ENCODE measurements at regions of chr4 and their contacts with region 1.

Region 1: DNA sequence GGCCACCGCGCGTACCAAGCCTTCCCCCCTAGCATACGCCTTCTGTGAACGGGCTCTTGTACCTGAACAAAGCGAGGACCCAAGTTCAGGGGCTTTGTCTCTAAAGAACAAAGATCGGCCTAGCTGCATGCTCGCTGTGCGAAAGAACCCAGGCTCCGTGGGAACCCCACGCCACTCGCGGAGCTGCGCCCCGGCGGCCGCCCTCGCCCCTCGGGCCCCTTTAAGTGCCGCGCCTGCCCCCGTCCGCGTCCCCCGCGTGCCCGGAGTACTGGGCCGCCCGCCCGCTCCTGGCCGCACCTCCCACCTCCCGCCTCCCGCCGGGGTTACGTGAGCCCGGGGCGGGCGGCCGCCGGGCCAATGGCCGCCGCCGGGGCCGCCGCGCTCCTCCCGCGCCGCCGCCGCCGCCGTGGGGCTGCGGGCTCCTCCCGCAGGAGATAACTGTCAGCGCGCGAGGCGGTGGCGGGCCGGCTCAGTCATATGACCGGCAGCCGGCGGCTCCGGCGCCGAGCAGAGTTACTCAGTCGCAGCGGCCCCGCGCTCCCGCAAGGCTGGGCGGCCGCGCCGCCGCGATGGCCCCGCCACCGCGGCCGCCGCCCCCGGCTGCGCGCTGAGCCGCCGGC is at the start of gene FNIP2:
- DNase-seq: peak; percentile 69 to 83 (median 70)
- ATAC-seq: peak; percentile 90
- H3K4me3 ChIP-seq: peak within 1 kb of the TSS; percentile 68
- H3K4me3 Mint-ChIP-seq: peak within 1 kb of the TSS; percentile 92 to 100 (median 99)
- H3K27ac ChIP-seq: peak within 1 kb of the TSS; percentile 80
- H3K27ac Mint-ChIP-seq: peak within 1 kb of the TSS; percentile 90 to 99 (median 98)
- H3K4me1 ChIP-seq: peaks cover 0 to 8% of the 10 kb centered on the region in 2 donors
- H3K4me1 Mint-ChIP-seq: peaks cover 21 to 52% (median 43%) of the 10 kb centered on the region in 7 donors
- H3K27me3 ChIP-seq: no peaks in the 10 kb centered on the region
- H3K27me3 Mint-ChIP-seq: peaks cover 0 to 5% (median 0%) of the 10 kb centered on the region in 5 donors
- total RNA-seq, gene FNIP2: 9.8 to 19.5 (median 11.5) TPM

Region 2: GRCh38 chr4:158722917-158723793 is 45.5 kb before region 1 on chr4 and contains the start of gene PPID:
- CTCF ChIA-PET with region 1: no interaction called
- POLR2A ChIA-PET with region 1: interaction called, 6 read pairs
- intact Hi-C with region 1: loop called (anchors 1 kb)
- DNase-seq: peak; percentile 64 to 86 (median 71)
- ATAC-seq: peak; percentile 90
- H3K4me3 ChIP-seq: peak within 1 kb of the TSS; percentile 93
- H3K4me3 Mint-ChIP-seq: peak within 1 kb of the TSS; percentile 92 to 99 (median 98)
- H3K27ac ChIP-seq: peak within 1 kb of the TSS; percentile 89
- H3K27ac Mint-ChIP-seq: peak within 1 kb of the TSS; percentile 95 to 99 (median 99)
- H3K4me1 ChIP-seq: peaks cover 0 to 3% of the 10 kb centered on the region in 2 donors
- H3K4me1 Mint-ChIP-seq: peaks cover 16 to 47% (median 37%) of the 10 kb centered on the region in 7 donors
- H3K27me3 ChIP-seq: no peaks in the 10 kb centered on the region
- H3K27me3 Mint-ChIP-seq: peaks cover under 1 to 17% (median 7%) of the 10 kb centered on the region in 5 donors
- total RNA-seq, gene PPID: 13.4 to 46.1 (median 26.5) TPM

Region 3: GRCh38 chr4:158793021-158793420 is 24.4 kb after region 1 on chr4:
- CTCF ChIA-PET with region 1: no interaction called
- POLR2A ChIA-PET with region 1: no interaction called
- intact Hi-C with region 1: no loop called
- DNase-seq: no peak
- ATAC-seq: no peak
- H3K4me3 ChIP-seq: no peak overlapping the region
- H3K4me3 Mint-ChIP-seq: no peak overlapping the region
- H3K27ac ChIP-seq: no peak overlapping the region
- H3K27ac Mint-ChIP-seq: no peak overlapping the region
- H3K4me1 ChIP-seq: no peaks in the 10 kb centered on the region
- H3K4me1 Mint-ChIP-seq: peaks cover under 1 to 17% (median 5%) of the 10 kb centered on the region in 7 donors
- H3K27me3 ChIP-seq: no peaks in the 10 kb centered on the region
- H3K27me3 Mint-ChIP-seq: no peaks in the 10 kb centered on the region

Region 4: GRCh38 chr4:158809611-158810486 is 41.2 kb after region 1 on chr4:
- CTCF ChIA-PET with region 1: interaction called, 3 read pairs
- POLR2A ChIA-PET with region 1: interaction called, 3 read pairs
- intact Hi-C with region 1: loop called (anchors 2 kb)
- DNase-seq: peak in 6 of 9 donors; percentile 28 to 51 (median 47)
- ATAC-seq: peak; percentile 84
- H3K4me3 ChIP-seq: no peak overlapping the region
- H3K4me3 Mint-ChIP-seq: peak overlapping the region; percentile 62 to 88 (median 75)
- H3K27ac ChIP-seq: peak overlapping the region; percentile 35
- H3K27ac Mint-ChIP-seq: peak overlapping the region; percentile 71 to 87 (median 82)
- H3K4me1 ChIP-seq: peaks cover 4 to 30% of the 10 kb centered on the region in 2 donors
- H3K4me1 Mint-ChIP-seq: peaks cover 31 to 58% (median 44%) of the 10 kb centered on the region in 7 donors
- H3K27me3 ChIP-seq: no peaks in the 10 kb centered on the region
- H3K27me3 Mint-ChIP-seq: no peaks in the 10 kb centered on the region

Region 5: GRCh38 chr4:158850800-158851644 is 82.4 kb after region 1 on chr4:
- CTCF ChIA-PET with region 1: interaction called, 4 read pairs
- POLR2A ChIA-PET with region 1: no interaction called
- intact Hi-C with region 1: loop called (anchors 1 kb)
- DNase-seq: peak in 5 of 9 donors; percentile 27 to 37 (median 36)
- ATAC-seq: peak; percentile 62
- H3K4me3 ChIP-seq: no peak overlapping the region
- H3K4me3 Mint-ChIP-seq: no peak overlapping the region
- H3K27ac ChIP-seq: no peak overlapping the region
- H3K27ac Mint-ChIP-seq: no peak overlapping the region
- H3K4me1 ChIP-seq: no peaks in the 10 kb centered on the region
- H3K4me1 Mint-ChIP-seq: peaks cover 7 to 13% (median 11%) of the 10 kb centered on the region in 7 donors
- H3K27me3 ChIP-seq: no peaks in the 10 kb centered on the region
- H3K27me3 Mint-ChIP-seq: no peaks in the 10 kb centered on the region

Region 6: DNA sequence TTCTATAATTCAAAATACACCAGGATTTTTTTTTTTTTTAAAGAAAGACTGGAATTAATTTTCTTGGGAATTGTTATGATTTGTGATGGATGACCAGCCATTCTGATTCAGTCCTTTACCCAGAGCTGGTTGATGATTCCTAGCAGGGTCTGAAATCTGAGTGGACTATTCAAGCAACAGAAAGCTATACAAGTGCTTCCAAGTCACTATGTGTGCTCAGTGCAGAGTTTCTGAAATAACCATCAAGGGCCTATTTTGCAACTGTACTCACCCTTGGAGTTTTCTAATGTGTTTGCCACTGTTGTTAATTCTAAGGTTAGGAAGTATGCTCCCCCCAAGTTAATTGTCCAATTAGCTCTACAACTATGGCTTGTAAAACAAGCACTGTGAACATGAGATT is 196.6 kb after region 1 on chr4:
- CTCF ChIA-PET with region 1: no interaction called
- POLR2A ChIA-PET with region 1: no interaction called
- intact Hi-C with region 1: no loop called
- DNase-seq: no peak
- ATAC-seq: no peak
- H3K4me3 ChIP-seq: no peak overlapping the region
- H3K4me3 Mint-ChIP-seq: no peak overlapping the region
- H3K27ac ChIP-seq: no peak overlapping the region
- H3K27ac Mint-ChIP-seq: no peak overlapping the region
- H3K4me1 ChIP-seq: no peaks in the 10 kb centered on the region
- H3K4me1 Mint-ChIP-seq: no peaks in the 10 kb centered on the region
- H3K27me3 ChIP-seq: peaks cover 0 to 4% of the 10 kb centered on the region in 2 donors
- H3K27me3 Mint-ChIP-seq: peaks cover 5 to 19% (median 11%) of the 10 kb centered on the region in 5 donors

Measured in naive thymus-derived CD4-positive, alpha-beta T cell (primary cell).